ENCODE measurements at regions of chrX and their contacts with region 1.

Region 1: DNA sequence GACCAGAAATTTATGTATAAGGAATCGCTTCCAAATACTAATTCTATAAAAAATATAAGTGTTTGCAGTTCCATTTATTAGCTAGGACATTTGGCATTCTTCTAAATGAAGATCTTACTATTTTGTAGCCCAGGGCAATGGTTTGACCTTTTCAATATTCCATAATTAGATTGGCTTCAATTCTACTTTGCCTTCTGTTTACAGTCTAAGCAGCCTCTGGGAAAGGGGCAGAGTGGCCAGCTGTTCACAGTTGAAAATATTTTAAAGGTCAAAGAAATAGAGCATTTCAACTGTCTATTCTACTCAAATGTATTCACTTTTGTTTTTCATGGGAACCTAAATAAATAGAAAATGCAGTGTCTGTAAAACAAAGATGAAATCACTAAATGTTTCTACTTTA is 912.0 kb upstream of the GRIA3 start:
- DNase-seq: no peak
- ATAC-seq: no peak
- H3K4me3 ChIP-seq: no peak overlapping the region
- H3K27ac ChIP-seq: no peak overlapping the region
- H3K4me1 ChIP-seq: no peaks in the 10 kb centered on the region
- H3K27me3 ChIP-seq: no peaks in the 10 kb centered on the region
- CTCF ChIP-seq: no peak
- POLR2A ChIP-seq: no peak

Region 2: DNA sequence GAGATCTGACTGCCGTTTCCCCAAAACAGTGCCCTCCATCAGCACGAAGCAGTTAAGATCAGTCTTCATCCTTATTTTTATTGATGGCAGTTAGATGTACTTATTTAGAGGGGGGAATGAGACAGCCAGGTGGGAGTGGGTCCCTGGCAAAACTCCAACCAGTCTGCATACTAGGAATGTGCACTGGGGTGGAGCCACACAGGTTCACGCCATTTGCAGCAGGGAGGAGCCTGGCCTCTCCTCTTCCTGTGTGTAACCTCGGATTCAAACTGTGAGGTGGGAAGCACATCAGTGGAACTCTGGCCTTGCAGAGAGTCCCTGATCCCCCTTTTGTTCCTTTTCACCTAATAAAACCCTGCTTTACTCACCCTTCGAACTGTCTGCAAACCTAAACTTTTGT is 75.7 kb before region 1 on chrX:
- intact Hi-C with region 1: loop called in 1 of 2 experiments (anchors 5 kb)
- DNase-seq: no peak
- ATAC-seq: no peak
- H3K4me3 ChIP-seq: no peak overlapping the region
- H3K27ac ChIP-seq: no peak overlapping the region
- H3K4me1 ChIP-seq: no peaks in the 10 kb centered on the region
- H3K27me3 ChIP-seq: no peaks in the 10 kb centered on the region
- CTCF ChIP-seq: no peak
- POLR2A ChIP-seq: no peak

Region 3: GRCh38 chrX:122666601-122667000 is 394.5 kb after region 1 on chrX:
- intact Hi-C with region 1: no loop called
- DNase-seq: no peak
- ATAC-seq: no peak
- H3K4me3 ChIP-seq: no peak overlapping the region
- H3K27ac ChIP-seq: no peak overlapping the region
- H3K4me1 ChIP-seq: no peaks in the 10 kb centered on the region
- H3K27me3 ChIP-seq: no peaks in the 10 kb centered on the region
- CTCF ChIP-seq: no peak
- POLR2A ChIP-seq: no peak